ENCODE measurements at regions of chr7 and their contacts with region 1.

Region 1: DNA sequence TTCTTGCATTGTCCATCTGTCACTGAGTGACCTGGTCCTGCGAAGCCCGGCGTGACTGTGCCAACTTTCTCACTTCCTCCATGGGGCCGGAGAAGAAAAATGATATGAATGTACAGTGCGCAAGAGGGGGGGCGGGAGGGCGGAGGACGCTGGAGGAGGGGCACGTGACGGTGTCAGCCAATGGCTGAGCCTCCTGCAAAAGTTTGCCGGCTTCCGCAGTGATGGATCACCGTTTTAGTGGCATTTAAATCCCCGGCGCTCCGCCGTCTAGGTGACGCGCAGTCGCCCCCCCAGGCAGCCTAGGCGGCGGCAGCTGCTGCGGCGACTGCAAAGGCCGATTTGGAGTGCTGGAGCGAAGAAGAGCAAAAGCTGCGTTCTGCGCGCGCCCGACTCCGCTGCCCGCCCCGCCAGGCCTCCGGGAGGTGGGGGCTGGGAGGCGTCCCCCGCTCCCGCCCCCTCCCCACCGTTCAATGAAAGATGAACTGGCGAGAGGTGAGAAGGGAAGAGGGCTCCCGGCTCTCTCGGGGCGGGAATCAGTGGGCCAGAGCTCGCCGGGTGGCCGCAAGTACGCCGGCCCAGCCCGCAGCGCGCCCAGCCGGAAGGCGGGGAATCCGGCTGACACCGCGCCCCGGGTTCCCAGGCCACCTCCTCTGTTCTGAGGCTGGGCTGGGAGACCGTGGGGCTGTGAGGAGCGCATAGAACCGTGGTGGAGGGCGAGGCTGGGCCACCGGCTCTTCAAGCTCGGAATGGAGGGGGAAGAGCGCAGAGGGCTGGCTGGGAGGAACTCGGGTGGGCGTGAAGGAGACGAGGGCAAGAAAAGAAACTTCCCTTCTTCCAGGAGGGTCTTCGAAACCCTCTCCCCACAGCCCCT is at the start of gene HOXA1:
- DNase-seq: peak; percentile 98
- H3K27ac ChIP-seq: peak within 1 kb of the TSS; percentile 95
- CTCF ChIP-seq: no peak

Region 2: GRCh38 chr7:26853788-26854393 is 242.2 kb before region 1 on chr7:
- CTCF ChIA-PET with region 1: interaction called, 14 read pairs
- POLR2A ChIA-PET with region 1: no interaction called
- DNase-seq: no peak
- H3K27ac ChIP-seq: no peak overlapping the region
- CTCF ChIP-seq: peak; percentile 83

Measured in RWPE1 (cell line).